ENCODE measurements at regions of chr7 and their contacts with region 1.

Region 1: DNA sequence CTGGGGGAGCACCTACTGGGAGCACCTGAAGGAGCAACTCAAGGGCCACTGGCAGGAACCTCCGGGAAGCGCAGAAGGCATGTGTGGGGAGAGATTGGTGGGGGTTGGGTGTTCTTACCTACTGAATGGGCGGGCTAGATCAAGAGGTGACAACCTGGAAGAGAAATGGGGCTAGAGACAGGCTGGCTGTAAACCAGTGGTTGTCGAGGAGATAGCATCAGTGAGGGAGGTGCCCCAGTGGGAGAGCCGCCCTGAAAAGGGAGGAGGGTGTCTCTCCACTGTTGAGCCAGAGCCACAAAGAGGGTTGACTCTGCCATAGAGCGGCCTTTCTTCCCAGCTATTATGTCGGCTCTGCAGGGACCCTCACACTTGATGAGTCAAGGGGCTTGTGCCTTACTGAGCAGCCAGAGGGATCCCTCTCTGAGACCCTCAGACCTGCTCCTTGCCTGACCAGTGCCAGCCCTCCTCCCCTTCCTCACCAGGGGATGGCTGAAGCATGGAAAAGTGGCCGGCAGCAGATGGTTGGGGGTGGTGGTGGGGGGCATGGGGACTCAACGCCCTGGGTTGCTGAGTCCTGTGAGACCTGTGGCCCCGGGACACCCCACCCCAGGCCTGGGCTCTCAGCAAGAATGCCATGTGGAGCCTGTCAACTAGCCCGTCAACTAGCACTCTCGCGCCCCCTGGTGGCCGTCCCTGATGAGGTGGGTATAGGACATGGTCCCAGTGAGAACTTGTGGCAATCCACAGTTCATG is 36.5 kb upstream of the PURB start:
- DNase-seq: peak; percentile 89 to 93
- H3K4me3 ChIP-seq: no peak overlapping the region
- H3K27ac ChIP-seq: no peak overlapping the region
- H3K4me1 ChIP-seq: peaks cover 0 to 12% of the 10 kb centered on the region in 2 donors
- H3K27me3 ChIP-seq: no peaks in the 10 kb centered on the region
- CTCF ChIP-seq: peak; percentile 60 to 85 (median 74)
- POLR2A ChIP-seq: no peak

Region 2: DNA sequence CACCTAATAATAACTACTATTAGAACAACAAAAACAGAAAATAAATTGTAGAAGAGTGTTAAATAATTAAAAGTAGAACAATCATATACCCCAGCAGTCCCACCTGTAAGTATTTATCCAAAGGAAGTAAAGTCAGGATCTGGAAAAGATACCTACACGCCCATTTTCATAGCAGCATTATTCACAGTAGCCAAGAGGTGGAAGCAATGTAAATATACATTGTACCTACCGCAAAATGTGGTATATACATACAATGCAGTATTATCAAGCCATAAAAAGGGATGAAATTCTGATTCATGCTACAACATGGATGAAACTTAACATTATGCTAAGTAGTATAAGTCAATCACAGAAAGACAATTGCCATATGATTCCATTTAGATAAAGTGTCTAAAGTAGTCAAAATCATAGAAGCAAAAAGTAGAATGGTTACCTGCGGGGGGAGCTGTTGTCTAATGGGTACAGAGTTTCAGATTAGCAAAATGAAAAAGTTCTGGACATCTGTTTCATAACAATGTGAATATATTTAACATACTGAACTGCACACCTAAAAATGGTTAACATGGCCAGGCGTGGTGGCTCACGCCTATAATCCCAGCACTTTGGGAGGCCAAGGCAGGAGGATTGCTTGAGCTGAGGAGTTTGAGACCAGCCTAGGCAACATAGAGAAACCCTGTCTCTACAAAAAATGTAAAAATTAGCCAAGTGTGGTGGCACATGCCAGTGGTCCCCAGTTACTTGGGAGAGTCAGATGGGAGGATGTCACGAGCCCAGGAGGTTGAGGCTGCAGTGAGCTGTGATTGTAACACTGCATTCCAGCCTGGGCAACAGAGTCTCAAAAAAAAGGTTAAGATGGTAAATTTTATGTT is 333.7 kb before region 1 on chr7:
- intact Hi-C with region 1: loop called (anchors 5 kb)
- DNase-seq: peak; percentile 56 to 59
- H3K4me3 ChIP-seq: no peak overlapping the region
- H3K27ac ChIP-seq: peak overlapping the region in 1 of 3 donors; percentile 10
- H3K4me1 ChIP-seq: peaks cover 0 to 9% of the 10 kb centered on the region in 2 donors
- H3K27me3 ChIP-seq: no peaks in the 10 kb centered on the region
- CTCF ChIP-seq: peak in 4 of 6 experiments; percentile 58 to 78 (median 70)
- POLR2A ChIP-seq: no peak

Region 3: DNA sequence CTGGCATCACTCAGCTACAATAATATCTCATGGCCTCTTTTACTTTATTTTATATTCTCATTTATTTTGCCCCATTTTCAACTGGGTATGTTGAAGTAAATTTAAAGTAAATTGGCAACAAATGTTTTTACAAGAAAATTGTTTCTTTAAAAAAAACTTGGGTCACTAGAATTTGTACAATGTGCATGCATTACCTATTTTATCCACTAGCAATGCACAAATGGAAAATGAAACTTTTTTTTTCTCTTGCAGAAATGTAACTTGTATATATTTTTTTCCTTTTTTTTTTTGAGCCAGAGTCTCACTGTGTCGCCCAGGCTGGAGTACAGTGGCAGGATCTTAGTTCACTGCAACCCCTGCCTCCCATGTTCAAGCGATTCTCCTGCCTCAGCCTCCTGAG is 63.6 kb before region 1 on chr7:
- intact Hi-C with region 1: loop called (anchors 5 kb)
- DNase-seq: no peak
- H3K4me3 ChIP-seq: no peak overlapping the region
- H3K27ac ChIP-seq: no peak overlapping the region
- H3K4me1 ChIP-seq: no peaks in the 10 kb centered on the region
- H3K27me3 ChIP-seq: no peaks in the 10 kb centered on the region
- CTCF ChIP-seq: peak in 1 of 6 experiments; percentile 29
- POLR2A ChIP-seq: no peak

Region 4: DNA sequence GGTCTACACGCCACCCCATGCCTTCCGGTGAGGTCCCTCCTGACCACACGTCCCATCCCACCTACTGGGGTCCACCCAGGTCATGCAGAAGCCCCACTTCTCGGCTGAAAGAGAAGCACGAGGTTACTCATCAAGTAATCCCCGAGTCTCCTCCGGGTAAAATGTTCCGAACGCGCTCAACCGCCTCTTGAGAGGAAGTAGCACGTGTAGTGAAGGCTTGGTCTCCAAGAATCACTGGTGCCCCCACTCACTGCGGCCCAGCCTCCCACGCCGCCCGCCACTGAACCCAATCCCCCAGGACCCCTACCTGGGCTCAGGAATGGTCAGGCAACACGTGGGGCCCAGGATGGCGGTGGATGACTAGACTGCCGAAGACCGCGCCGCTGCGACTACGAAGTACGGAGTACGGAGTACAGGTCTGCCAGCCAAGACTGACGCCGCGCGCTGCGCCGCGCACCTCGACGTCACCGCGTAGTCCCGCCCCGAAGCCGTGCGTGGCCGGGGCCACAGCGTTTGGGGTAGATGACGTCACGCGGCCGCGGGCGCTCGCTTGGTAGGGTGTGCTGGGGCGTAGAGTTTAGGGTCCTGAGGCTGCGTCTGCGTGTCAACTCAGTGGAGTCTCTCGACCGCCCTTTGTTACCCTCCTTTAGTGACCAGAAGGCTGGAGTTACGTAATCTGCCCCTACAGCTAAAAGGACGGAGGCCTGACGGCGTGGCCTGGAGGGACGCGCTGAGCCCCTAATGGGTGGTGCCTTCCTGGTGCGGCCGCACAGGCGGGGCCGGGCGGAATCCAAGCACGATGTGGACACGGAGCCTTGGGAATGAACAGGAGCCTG is 64.7 kb after region 1 on chr7:
- intact Hi-C with region 1: no loop called
- DNase-seq: peak; percentile 91
- H3K4me3 ChIP-seq: peak overlapping the region; percentile 22 to 38 (median 24)
- H3K27ac ChIP-seq: peak overlapping the region; percentile 88 to 92 (median 91)
- H3K4me1 ChIP-seq: peaks cover 11 to 54% of the 10 kb centered on the region in 2 donors
- H3K27me3 ChIP-seq: no peaks in the 10 kb centered on the region
- CTCF ChIP-seq: peak in 1 of 6 experiments; percentile 7
- POLR2A ChIP-seq: peak in 1 of 2 donors; percentile 91

Measured in thyroid gland (tissue), 4 donors.